GM10248 (cell line): ENCODE measurements at regions of chr12 and their contacts with region 1.

Region 1: GRCh38 chr12:3803865-3804472 is 51.1 kb upstream of the CRACR2A start:
- DNase-seq: peak; percentile 63
- CTCF ChIP-seq: peak; percentile 95

Region 2: DNA sequence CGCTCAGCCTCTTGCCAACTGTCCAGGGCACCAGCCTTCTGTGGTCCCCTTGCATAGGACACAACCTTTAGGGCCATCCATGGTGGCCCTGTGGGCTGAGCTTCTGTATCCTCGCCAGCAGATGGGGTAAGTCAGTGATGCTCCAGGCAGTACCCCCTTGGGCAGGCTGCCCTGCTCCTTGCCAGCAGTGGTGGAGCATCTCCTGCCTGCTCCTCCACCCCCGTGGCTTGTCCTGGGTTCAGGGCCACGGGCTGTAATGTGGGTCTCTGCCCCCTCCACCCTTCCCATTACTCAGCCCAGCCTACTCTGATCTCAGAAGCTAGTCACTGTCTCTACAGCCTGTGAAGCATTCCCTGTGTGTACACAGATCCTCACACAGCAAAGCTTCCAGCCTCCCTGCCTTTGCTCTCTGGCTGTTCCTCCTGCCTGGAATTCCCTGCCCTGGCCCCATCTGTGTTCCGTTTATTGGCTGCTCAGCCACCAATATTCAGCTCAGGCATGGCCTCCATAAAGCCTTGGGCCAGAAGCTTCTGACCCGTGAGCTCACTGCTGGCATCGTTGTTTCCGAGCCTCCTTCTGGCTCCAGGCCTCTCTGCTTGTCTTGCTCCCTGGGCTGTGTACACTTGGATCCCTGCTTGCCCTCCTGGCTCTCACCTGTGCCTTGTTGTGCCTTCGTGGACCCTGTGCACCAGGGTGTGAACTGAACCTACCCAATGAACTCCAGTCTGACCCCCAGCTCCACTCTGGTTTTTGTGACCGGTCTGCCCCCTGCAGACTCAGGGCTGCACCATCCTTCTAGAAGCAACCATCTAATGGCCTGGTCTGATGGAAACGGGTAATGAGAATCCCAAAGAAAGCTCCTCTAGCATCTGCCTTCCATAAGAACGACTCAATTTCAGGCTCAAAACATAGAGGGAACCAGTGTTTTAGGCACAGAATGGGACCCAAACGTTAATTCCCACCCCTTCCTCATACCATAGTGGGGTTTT is 490.0 kb before region 1 on chr12:
- CTCF ChIA-PET with region 1: interaction called, 17 read pairs
- POLR2A ChIA-PET with region 1: no interaction called
- DNase-seq: peak; percentile 57
- CTCF ChIP-seq: peak; percentile 32

Region 3: GRCh38 chr12:3777206-3777809 is 26.7 kb before region 1 on chr12:
- CTCF ChIA-PET with region 1: interaction called, 12 read pairs
- POLR2A ChIA-PET with region 1: no interaction called
- DNase-seq: peak; percentile 34
- CTCF ChIP-seq: peak; percentile 51

Region 4: GRCh38 chr12:3791256-3792252 is 12.4 kb before region 1 on chr12:
- CTCF ChIA-PET with region 1: interaction called, 19 read pairs
- POLR2A ChIA-PET with region 1: no interaction called
- DNase-seq: no peak
- CTCF ChIP-seq: no peak

Region 5: GRCh38 chr12:3885277-3886094 is 81.5 kb after region 1 on chr12:
- CTCF ChIA-PET with region 1: no interaction called
- POLR2A ChIA-PET with region 1: no interaction called
- DNase-seq: peak; percentile 36
- CTCF ChIP-seq: peak; percentile 78

Region 6: GRCh38 chr12:3964439-3964838 is 160.5 kb after region 1 on chr12:
- CTCF ChIA-PET with region 1: no interaction called
- POLR2A ChIA-PET with region 1: no interaction called
- DNase-seq: peak; percentile 44
- CTCF ChIP-seq: peak; percentile 63